ENCODE measurements at regions of chr18 and their contacts with region 1.

Region 1: GRCh38 chr18:33231474-33232317 is 208.8 kb downstream of the CCDC178 start:
- DNase-seq: peak in 1 of 2 donors; percentile 72
- H3K4me3 ChIP-seq: no peak overlapping the region
- H3K27ac ChIP-seq: no peak overlapping the region
- H3K4me1 ChIP-seq: no peaks in the 10 kb centered on the region
- H3K27me3 ChIP-seq: no peaks in the 10 kb centered on the region
- CTCF ChIP-seq: peak; percentile 23 to 80 (median 74)

Region 2: DNA sequence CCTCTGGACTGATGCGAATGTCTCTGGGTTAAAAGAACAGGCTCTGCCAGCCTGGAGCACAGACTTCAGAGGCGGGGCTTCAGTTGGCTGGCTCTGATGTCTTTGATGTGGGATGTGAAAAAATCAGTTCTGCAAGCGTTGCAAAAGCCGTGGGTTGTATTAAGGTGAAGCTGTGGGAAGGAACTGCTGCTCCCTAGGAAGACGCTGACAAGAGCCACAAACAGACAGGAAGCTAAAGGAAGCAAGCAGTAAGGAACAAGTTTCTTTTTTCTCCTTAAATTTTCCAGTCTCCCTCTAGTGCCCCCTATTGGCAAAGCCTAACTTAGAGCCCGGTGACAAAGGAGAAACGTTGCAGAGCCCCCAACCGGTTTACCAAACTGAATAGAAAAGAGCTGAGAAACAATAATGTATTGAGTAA is 30.2 kb before region 1 on chr18:
- intact Hi-C with region 1: no loop called
- DNase-seq: no peak
- H3K4me3 ChIP-seq: no peak overlapping the region
- H3K27ac ChIP-seq: no peak overlapping the region
- H3K4me1 ChIP-seq: no peaks in the 10 kb centered on the region
- H3K27me3 ChIP-seq: no peaks in the 10 kb centered on the region
- CTCF ChIP-seq: no peak

Region 3: GRCh38 chr18:33495278-33495677 is 263.6 kb after region 1 on chr18:
- intact Hi-C with region 1: loop called (anchors 2 kb)
- DNase-seq: no peak
- H3K4me3 ChIP-seq: no peak overlapping the region
- H3K27ac ChIP-seq: no peak overlapping the region
- H3K4me1 ChIP-seq: no peaks in the 10 kb centered on the region
- H3K27me3 ChIP-seq: no peaks in the 10 kb centered on the region
- CTCF ChIP-seq: peak in 1 of 3 experiments; percentile 36